ENCODE measurements at regions of chr12 and their contacts with region 1.

Region 1: DNA sequence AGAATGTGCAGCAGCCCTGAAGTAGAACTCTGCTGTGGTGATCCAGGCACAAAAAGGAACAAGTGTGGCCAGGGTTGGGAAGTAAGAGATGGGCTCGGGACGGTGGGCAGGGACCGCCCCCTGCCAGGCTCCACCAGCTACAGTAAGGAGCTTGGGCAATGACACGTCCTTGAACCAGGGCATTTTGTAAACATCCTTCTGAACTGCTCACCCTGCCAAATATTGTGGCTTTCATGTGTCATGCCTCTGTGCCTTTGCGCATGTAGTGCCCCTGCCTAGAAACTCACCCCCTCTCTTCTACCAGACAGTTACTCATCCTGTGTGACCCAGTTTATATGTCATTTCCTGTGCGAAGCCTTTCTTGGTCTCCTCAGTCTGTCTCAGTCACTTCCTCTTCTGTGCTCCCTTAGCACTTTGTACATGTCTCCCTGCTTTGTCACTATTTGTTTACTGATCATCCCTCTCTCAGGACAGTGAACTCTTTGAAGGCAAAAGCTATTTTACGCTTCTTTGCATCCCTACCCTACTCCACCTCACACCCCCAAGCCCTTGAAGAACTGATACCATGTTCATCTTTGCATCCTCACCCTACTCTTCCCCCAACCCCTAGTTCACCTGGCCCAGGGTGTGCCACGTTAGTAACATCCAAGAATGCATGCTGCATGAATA is 108.9 kb upstream of the PLEKHG7 start:
- DNase-seq: peak in 1 of 2 donors; percentile 69
- ATAC-seq: peak; percentile 59
- H3K4me3 ChIP-seq: no peak overlapping the region
- H3K27ac ChIP-seq: no peak overlapping the region
- H3K4me1 ChIP-seq: no peaks in the 10 kb centered on the region
- H3K27me3 ChIP-seq: no peaks in the 10 kb centered on the region

Region 2: DNA sequence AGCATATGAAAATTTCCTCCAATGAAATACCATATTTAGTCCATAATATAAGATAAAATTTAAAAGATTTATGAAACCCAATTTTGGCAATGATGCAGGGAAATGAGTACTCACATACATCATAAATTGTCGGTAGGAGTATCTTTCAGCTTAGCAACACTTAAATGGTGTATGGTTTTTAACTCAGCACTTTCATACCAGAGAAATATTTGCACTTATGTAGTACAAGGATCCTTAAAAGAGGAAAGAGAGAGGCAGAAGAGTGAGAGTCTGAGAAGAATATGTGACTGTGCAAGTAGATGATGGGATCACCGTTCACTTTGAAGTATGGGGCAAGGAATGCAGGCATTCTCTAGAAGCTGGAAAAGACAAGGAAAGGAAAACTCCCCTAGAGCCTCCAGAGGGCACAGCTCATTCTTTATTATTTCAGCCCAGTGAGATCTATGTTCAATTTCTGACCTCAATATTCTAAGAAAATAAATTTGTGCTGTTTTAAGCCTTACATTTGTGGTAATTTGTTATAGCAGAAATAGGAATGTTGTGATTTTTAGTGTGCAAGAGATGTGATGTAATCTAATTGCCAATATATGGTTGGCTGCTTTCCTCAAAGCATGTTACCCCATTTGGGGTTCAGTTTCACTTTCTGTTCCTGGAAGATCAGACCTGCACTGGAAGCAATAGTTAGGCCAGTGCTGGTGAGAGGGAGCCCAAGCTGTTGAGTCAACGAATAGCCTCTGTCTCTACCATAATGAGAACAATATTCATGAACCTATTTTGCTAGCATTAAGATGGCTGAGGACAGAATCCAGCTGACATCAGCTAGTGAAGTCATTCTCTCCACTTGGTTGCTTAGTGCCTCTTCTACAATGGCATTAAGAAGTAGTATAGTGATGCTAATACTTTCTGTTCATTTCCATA is 1031.7 kb before region 1 on chr12:
- intact Hi-C with region 1: loop called in 1 of 2 experiments (anchors 10 kb)
- DNase-seq: no peak
- ATAC-seq: no peak
- H3K4me3 ChIP-seq: no peak overlapping the region
- H3K27ac ChIP-seq: no peak overlapping the region
- H3K4me1 ChIP-seq: no peaks in the 10 kb centered on the region
- H3K27me3 ChIP-seq: no peaks in the 10 kb centered on the region

Region 3: DNA sequence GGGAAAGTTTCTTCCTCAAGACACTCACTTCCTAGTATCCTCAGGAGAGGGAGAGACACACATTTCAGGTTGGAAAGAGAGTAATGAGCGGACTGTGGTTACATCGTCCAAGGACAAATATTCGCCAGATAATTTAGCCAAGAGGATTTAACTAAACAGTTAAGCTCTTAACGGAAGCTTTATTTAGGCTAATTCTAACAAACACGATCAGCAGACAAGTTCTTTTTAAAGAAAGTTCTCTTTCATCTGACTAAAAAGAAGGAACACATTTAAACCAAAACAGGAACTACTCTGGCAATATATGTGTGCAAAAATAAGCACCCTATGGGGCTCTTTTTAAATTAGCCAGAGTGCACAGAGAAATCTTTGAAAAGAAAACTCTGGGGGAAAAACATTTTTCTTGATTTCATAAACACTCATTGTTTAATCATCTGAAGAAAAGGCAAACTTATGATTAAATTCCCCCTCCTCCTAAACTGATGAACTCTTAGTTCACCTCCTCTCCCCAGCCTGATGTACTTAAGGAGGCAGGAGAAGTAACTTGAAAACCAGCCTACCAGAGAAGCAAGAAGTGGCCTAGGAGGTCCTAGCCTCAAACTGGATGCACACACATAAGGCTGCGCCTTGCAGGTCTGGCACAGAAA is 434.9 kb before region 1 on chr12:
- intact Hi-C with region 1: no loop called
- DNase-seq: no peak
- ATAC-seq: no peak
- H3K4me3 ChIP-seq: no peak overlapping the region
- H3K27ac ChIP-seq: no peak overlapping the region
- H3K4me1 ChIP-seq: no peaks in the 10 kb centered on the region
- H3K27me3 ChIP-seq: no peaks in the 10 kb centered on the region

Region 4: DNA sequence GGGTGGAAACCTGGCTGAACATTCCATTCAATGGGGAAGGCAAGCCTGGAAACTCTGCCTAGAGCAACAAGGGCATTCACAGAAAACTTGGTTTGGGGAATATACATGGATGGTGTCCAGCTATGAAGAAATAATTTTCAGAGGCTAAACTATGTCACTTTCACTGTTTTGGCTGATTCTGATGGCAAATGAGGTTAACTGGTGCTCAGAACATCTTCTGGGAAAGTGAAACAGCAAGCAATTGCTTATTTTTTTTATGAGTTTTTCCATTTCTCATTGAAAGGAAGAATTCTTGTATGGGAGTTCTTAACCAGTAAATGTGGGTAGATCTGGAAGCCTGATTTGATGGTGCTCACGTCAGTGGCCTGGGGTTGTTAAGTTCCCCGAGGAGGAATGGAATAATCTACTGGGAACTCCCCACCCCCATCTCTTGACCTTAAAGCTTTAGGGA is 315.5 kb before region 1 on chr12:
- intact Hi-C with region 1: no loop called
- DNase-seq: no peak
- ATAC-seq: peak; percentile 77
- H3K4me3 ChIP-seq: no peak overlapping the region
- H3K27ac ChIP-seq: no peak overlapping the region
- H3K4me1 ChIP-seq: no peaks in the 10 kb centered on the region
- H3K27me3 ChIP-seq: no peaks in the 10 kb centered on the region